Endothelial cell of umbilical vein (primary cell): ENCODE measurements at regions of chr11 and their contacts with region 1.

Region 1: DNA sequence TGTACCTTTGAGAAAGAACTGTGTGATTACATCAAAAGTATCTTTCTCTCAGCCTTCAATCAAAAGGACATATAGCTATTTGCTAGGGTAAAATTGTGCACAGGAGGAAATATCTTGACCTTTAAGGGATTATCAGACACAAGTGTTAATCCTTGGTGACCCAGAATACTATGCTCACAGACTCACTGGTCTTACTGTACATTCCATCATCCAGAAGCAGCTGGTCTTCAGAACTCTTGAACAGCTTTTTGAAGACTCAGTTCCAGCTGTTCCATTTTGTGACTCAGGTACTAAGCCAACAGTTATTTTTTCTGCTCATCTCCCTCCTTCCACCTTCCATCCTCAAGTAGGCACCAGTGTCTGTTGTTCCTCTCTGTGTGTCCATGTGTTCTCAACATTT is 19.8 kb downstream of the ZBED5 start:
- DNase-seq: no peak
- H3K4me3 ChIP-seq: no peak overlapping the region
- H3K27ac ChIP-seq: no peak overlapping the region
- H3K4me1 ChIP-seq: no peaks in the 10 kb centered on the region
- H3K27me3 ChIP-seq: no peaks in the 10 kb centered on the region
- CTCF ChIP-seq: no peak
- POLR2A ChIP-seq: no peak

Region 2: GRCh38 chr11:10847960-10848870 is 10.1 kb after region 1 on chr11:
- CTCF ChIA-PET with region 1: interaction called, 13 read pairs
- POLR2A ChIA-PET with region 1: no interaction called
- dilution Hi-C with region 1: no loop called
- intact Hi-C with region 1: no loop called
- DNase-seq: no peak
- H3K4me3 ChIP-seq: no peak overlapping the region
- H3K27ac ChIP-seq: no peak overlapping the region
- H3K4me1 ChIP-seq: no peaks in the 10 kb centered on the region
- H3K27me3 ChIP-seq: no peaks in the 10 kb centered on the region
- CTCF ChIP-seq: no peak
- POLR2A ChIP-seq: no peak